ENCODE measurements at regions of chr10 and their contacts with region 1.

Region 1: DNA sequence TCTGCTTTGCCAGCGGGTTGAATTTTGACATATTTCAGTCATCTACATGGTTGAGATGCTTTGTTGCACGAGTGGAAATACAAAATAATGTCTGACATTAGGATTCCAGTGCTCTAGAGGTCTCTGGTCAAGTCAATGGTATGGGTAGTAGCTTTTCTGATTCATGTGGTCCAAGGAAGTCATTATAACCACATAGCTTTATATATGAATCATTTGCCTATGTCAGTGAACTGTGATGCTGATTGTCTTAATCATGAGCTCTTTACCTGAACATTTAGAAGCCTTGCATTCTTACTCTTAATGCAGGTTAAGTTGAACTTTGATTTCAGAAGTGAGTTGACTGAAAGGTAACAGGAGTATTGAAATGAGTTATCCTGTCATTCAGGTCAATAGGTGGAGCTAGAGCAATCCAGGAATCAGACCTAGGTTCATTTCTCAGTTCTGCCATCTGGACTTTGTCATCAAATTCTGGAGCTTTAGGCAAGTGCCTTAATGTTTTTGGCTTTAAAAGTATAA is 3.3 kb downstream of the MAPK8 start:
- DNase-seq: peak; percentile 38
- H3K4me3 Mint-ChIP-seq: no peak overlapping the region
- H3K27ac Mint-ChIP-seq: no peak overlapping the region
- H3K4me1 Mint-ChIP-seq: peaks cover 23% of the 10 kb centered on the region
- H3K27me3 Mint-ChIP-seq: no peaks in the 10 kb centered on the region
- CTCF ChIP-seq: peak; percentile 26

Region 2: GRCh38 chr10:48324580-48324979 is 14.8 kb after region 1 on chr10:
- CTCF ChIA-PET with region 1: interaction called, 48 read pairs
- POLR2A ChIA-PET with region 1: interaction called, 7 read pairs
- intact Hi-C with region 1: no loop called
- DNase-seq: no peak
- H3K4me3 Mint-ChIP-seq: no peak overlapping the region
- H3K27ac Mint-ChIP-seq: no peak overlapping the region
- H3K4me1 Mint-ChIP-seq: peaks cover 6% of the 10 kb centered on the region
- H3K27me3 Mint-ChIP-seq: no peaks in the 10 kb centered on the region
- CTCF ChIP-seq: no peak

Region 3: GRCh38 chr10:48333856-48334255 is 24.1 kb after region 1 on chr10:
- CTCF ChIA-PET with region 1: interaction called, 48 read pairs
- POLR2A ChIA-PET with region 1: interaction called, 15 read pairs
- intact Hi-C with region 1: no loop called
- DNase-seq: peak; percentile 92
- H3K4me3 Mint-ChIP-seq: no peak overlapping the region
- H3K27ac Mint-ChIP-seq: peak overlapping the region; percentile 67
- H3K4me1 Mint-ChIP-seq: peaks cover 35% of the 10 kb centered on the region
- H3K27me3 Mint-ChIP-seq: no peaks in the 10 kb centered on the region
- CTCF ChIP-seq: no peak

Region 4: GRCh38 chr10:48414778-48415177 is 105.0 kb after region 1 on chr10:
- CTCF ChIA-PET with region 1: no interaction called
- POLR2A ChIA-PET with region 1: interaction called, 9 read pairs
- intact Hi-C with region 1: loop called (anchors 10 kb)
- DNase-seq: peak; percentile 39
- H3K4me3 Mint-ChIP-seq: no peak overlapping the region
- H3K27ac Mint-ChIP-seq: peak overlapping the region; percentile 63
- H3K4me1 Mint-ChIP-seq: peaks cover 27% of the 10 kb centered on the region
- H3K27me3 Mint-ChIP-seq: no peaks in the 10 kb centered on the region
- CTCF ChIP-seq: no peak